Uterus (tissue), 4 donors: ENCODE measurements at regions of chr10 and their contacts with region 1.

Region 1: DNA sequence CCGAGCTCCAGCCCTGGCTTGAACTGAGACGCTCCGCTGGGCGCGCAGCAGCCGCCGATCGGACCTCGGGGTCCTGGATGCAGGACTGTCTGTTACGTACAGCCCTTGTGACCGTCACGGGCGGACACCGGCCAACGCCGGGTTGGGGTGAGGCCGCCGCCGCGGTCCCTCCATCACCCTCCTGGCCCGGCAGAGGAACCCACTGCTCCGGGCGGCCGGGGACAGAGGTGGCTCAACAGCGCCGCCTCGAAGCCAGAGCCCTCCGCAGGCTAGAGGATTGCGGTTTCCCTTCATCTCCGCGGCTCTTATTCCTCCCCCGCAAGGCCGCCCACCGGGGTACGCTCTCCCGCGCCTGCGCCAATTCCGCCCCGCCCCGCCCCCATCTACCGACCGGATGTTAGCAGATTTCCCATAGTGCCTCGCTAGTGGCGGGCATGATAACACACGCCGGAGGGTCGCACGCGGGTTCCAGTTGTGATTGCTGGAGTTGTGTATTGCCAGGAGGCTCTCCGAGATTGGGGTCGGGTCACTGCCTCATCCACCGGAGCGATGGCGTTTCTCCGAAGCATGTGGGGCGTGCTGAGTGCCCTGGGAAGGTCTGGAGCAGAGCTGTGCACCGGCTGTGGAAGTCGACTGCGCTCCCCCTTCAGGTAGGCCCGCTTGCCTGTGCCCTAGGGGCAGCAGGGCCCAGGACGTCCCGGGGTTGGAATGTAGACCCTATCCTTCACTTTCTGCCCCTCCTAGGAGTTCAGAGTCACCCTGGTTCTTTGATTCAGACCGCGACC is at the start of gene TFAM:
- DNase-seq: peak; percentile 97
- H3K4me3 ChIP-seq: peak within 1 kb of the TSS; percentile 71 to 78
- H3K27ac ChIP-seq: peak within 1 kb of the TSS; percentile 87 to 95
- H3K4me1 ChIP-seq: no peaks in the 10 kb centered on the region
- H3K27me3 ChIP-seq: no peaks in the 10 kb centered on the region
- CTCF ChIP-seq: peak; percentile 66 to 72 (median 68)
- POLR2A ChIP-seq: peak; percentile 68 to 78
- total RNA-seq, gene TFAM: 11.8 to 48.6 (median 25.9) TPM

Region 2: DNA sequence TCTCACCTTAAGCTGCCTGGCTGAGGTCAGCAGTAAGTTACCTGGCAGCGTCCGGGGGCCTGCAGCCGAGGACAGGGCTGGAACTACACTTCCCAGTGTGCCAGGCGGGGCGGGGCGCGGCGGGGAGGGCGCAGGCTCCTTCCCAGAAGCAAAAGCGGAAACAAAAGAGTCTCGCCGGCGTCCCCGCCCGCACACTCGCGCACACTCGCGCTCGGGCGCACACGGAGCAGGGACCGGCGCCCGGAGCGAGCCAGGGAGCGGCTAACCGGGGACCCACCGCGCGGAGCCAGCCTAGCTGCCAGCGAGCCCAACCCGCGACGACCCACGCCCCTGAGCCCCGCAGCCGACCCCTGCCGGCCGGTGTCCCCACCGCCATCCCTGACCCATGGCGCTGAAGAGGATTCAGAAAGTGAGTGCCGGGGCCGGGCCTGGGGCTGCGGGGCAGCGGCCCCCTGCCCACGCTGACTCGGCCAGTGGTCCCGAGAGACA is 50.3 kb before region 1 on chr10 and contains the start of gene UBE2D1:
- intact Hi-C with region 1: loop called (anchors 10 kb)
- DNase-seq: peak; percentile 83 to 86
- H3K4me3 ChIP-seq: peak within 1 kb of the TSS; percentile 84 to 97
- H3K27ac ChIP-seq: peak within 1 kb of the TSS; percentile 79 to 82
- H3K4me1 ChIP-seq: no peaks in the 10 kb centered on the region
- H3K27me3 ChIP-seq: no peaks in the 10 kb centered on the region
- CTCF ChIP-seq: no peak
- POLR2A ChIP-seq: peak; percentile 37 to 88
- total RNA-seq, gene UBE2D1: 9.4 to 67.6 (median 20.6) TPM